H1 (cell line): ENCODE measurements at regions of chr5 and their contacts with region 1.

Region 1: DNA sequence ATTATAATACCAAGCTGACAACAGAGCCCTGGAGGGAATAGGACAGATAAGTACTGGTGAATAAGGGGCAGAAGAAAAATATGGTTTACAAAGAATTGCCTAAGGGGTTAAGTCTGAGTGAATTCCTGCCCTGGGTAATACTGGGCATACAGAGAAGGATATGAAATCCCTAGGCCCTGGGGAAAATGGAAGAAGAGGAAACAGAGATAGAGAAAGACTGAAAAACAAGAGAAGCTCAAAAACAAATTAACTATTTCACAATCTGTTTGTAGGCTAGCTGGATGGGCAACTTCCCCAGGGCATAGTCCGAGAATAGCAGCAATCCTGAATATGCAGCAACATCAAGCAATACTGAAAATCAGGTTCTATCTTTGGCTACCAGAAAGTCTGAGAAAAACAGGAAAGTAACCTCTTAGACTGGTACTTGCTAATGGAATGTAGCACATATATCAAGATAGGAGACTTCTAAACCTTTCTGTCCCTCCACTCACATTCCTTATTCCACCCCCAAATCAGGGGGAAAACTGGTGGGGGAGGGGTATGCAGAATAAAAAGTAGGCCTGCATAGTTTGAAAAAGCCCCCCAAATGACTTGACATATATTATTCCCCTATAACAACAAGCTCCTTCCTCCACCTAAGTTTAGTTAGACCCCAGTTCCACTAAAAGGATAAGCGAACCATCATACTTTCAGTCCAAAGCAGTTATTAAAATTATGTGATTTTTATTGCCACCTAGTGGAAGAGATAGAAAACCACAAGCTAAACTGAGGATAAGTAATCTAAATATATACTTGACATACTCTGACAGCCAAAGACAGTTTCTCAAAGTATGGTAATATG is 20.6 kb downstream of the SLC38A9 start:
- DNase-seq: no peak
- H3K4me3 ChIP-seq: no peak overlapping the region
- H3K27ac ChIP-seq: no peak overlapping the region
- H3K4me1 ChIP-seq: peaks cover 0 to 7% (median 6%) of the 10 kb centered on the region in 4 experiments; a peak in 5 of 7 replicates
- H3K27me3 ChIP-seq: no peaks in the 10 kb centered on the region
- CTCF ChIP-seq: peak in 2 of 3 experiments; percentile 9 to 45; a peak in 2 of 4 replicates
- EP300 ChIP-seq: no peak
- POLR2A ChIP-seq: no peak
- RAD21 ChIP-seq: peak; percentile 57 to 66

Region 2: GRCh38 chr5:55407059-55407684 is 284.3 kb before region 1 on chr5:
- CTCF ChIA-PET with region 1: interaction called, 21 read pairs
- POLR2A ChIA-PET with region 1: interaction called, 3 read pairs
- DNase-seq: no peak
- H3K4me3 ChIP-seq: no peak overlapping the region
- H3K27ac ChIP-seq: no peak overlapping the region
- H3K4me1 ChIP-seq: no peaks in the 10 kb centered on the region
- H3K27me3 ChIP-seq: no peaks in the 10 kb centered on the region
- CTCF ChIP-seq: peak; percentile 2 to 71 (median 56)
- EP300 ChIP-seq: no peak
- POLR2A ChIP-seq: no peak
- RAD21 ChIP-seq: peak; percentile 81 to 83

Region 3: DNA sequence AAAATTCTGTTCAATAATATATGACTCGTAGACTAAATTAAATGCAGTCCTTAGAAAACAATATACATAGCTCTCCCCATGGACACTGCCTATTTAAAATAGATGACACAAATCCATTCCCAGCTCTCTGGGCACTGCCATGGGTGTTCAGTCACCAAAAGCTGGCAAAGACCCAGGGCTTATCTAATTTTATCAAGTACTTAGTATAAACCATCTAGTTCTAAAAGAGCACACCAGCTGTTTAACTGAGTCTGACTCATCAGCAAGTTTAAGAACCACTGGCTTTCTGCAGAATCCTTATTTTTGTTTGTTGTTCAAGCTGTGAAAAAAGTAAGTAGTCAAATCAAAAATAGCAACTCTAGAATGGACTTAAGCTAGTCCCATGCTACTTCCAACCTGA is 264.3 kb before region 1 on chr5:
- CTCF ChIA-PET with region 1: interaction called, 14 read pairs
- POLR2A ChIA-PET with region 1: interaction called, 4 read pairs
- DNase-seq: no peak
- H3K4me3 ChIP-seq: no peak overlapping the region
- H3K27ac ChIP-seq: no peak overlapping the region
- H3K4me1 ChIP-seq: no peaks in the 10 kb centered on the region; a peak in 1 of 7 replicates
- H3K27me3 ChIP-seq: no peaks in the 10 kb centered on the region
- CTCF ChIP-seq: no peak
- EP300 ChIP-seq: no peak
- POLR2A ChIP-seq: no peak
- RAD21 ChIP-seq: no peak

Region 4: DNA sequence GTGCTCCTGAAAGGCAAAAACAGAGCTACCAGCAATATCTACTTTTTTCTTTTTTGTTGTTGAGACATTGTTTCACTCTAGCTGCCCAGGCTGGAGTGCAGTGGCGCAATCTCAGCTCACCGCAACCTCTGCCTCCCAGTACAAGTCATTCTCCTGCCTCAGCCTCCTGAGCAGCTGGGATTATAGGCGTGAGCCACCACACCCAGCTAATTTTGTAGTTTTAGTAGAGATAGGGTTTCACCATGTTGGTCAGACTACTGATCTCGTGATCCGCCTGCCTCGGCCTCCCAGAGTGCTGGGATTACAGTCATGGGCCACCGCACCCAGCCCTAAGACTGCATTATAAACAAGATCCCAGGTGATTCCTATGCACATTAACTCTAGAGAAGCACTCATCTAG is 173.7 kb before region 1 on chr5:
- CTCF ChIA-PET with region 1: interaction called, 11 read pairs
- POLR2A ChIA-PET with region 1: no interaction called
- DNase-seq: no peak
- H3K4me3 ChIP-seq: no peak overlapping the region
- H3K27ac ChIP-seq: no peak overlapping the region
- H3K4me1 ChIP-seq: peaks cover 0 to 5% (median 0%) of the 10 kb centered on the region in 4 experiments; a peak in 1 of 7 replicates
- H3K27me3 ChIP-seq: no peaks in the 10 kb centered on the region
- CTCF ChIP-seq: no peak
- EP300 ChIP-seq: no peak
- POLR2A ChIP-seq: no peak
- RAD21 ChIP-seq: no peak

Region 5: GRCh38 chr5:55749387-55749786 is 57.9 kb after region 1 on chr5:
- CTCF ChIA-PET with region 1: no interaction called
- POLR2A ChIA-PET with region 1: no interaction called
- DNase-seq: no peak
- H3K4me3 ChIP-seq: no peak overlapping the region
- H3K27ac ChIP-seq: no peak overlapping the region
- H3K4me1 ChIP-seq: no peaks in the 10 kb centered on the region
- H3K27me3 ChIP-seq: no peaks in the 10 kb centered on the region
- CTCF ChIP-seq: no peak
- EP300 ChIP-seq: no peak
- POLR2A ChIP-seq: no peak
- RAD21 ChIP-seq: no peak

Region 6: DNA sequence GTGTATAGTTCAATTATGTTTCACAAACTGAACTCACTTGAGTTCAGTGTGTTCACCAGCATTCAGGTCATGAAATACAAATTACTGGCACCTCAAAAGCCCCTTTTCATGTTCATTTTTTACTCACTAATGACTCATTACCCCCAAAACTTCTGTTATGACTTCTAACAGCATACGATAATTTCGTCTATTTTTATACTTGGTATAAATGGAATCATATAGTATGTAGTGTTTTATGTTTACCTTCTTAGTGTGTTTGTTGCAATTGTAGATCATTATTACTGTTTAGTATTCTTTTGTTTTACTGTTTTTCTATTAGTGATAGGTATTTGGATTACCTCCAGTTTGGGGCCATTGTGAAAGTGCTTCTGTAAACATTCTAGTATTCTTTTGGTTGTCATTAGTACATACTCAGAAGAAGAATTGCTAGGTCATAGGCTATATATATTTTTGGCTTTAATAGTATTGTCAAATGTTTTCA is 79.7 kb after region 1 on chr5:
- CTCF ChIA-PET with region 1: no interaction called
- POLR2A ChIA-PET with region 1: no interaction called
- DNase-seq: no peak
- H3K4me3 ChIP-seq: no peak overlapping the region
- H3K27ac ChIP-seq: no peak overlapping the region
- H3K4me1 ChIP-seq: peaks cover 0 to 8% (median 3%) of the 10 kb centered on the region in 4 experiments; a peak in 5 of 7 replicates
- H3K27me3 ChIP-seq: no peaks in the 10 kb centered on the region
- CTCF ChIP-seq: no peak
- EP300 ChIP-seq: no peak
- POLR2A ChIP-seq: peak in 1 of 2 experiments; percentile 47; a peak in 1 of 3 replicates
- RAD21 ChIP-seq: no peak